ENCODE measurements at regions of chr20 and their contacts with region 1.

Region 1: GRCh38 chr20:53915446-53916172 is 154.8 kb downstream of the BCAS1 start:
- DNase-seq: peak; percentile 72
- H3K4me3 ChIP-seq: peak overlapping the region; percentile 50 to 73 (median 64)
- H3K27ac ChIP-seq: peak overlapping the region; percentile 86 to 95 (median 90)
- H3K4me1 ChIP-seq: peaks cover 18 to 42% (median 28%) of the 10 kb centered on the region in 3 donors
- H3K27me3 ChIP-seq: no peaks in the 10 kb centered on the region
- CTCF ChIP-seq: peak; percentile 92 to 96 (median 94)
- POLR2A ChIP-seq: no peak

Region 2: GRCh38 chr20:53578492-53579222 is 337.0 kb before region 1 on chr20:
- intact Hi-C with region 1: loop called (anchors 5 kb)
- DNase-seq: peak; percentile 11
- H3K4me3 ChIP-seq: peak overlapping the region in 2 of 4 donors; percentile 11 to 53
- H3K27ac ChIP-seq: peak overlapping the region; percentile 72 to 85 (median 82)
- H3K4me1 ChIP-seq: peaks cover 36 to 73% (median 46%) of the 10 kb centered on the region in 3 donors
- H3K27me3 ChIP-seq: no peaks in the 10 kb centered on the region
- CTCF ChIP-seq: peak; percentile 79 to 99 (median 95)
- POLR2A ChIP-seq: no peak

Region 3: GRCh38 chr20:54668271-54669039 is 752.8 kb after region 1 on chr20:
- intact Hi-C with region 1: no loop called
- DNase-seq: no peak
- H3K4me3 ChIP-seq: no peak overlapping the region
- H3K27ac ChIP-seq: no peak overlapping the region
- H3K4me1 ChIP-seq: peaks cover 0 to 8% (median 0%) of the 10 kb centered on the region in 3 donors
- H3K27me3 ChIP-seq: peaks cover 0 to 30% (median 0%) of the 10 kb centered on the region in 4 donors
- CTCF ChIP-seq: peak; percentile 16 to 51 (median 27)
- POLR2A ChIP-seq: no peak

Measured in esophagus squamous epithelium (tissue), 5 donors.